HEK293 (cell line): ENCODE measurements at regions of chr6 and their contacts with region 1.

Region 1: GRCh38 chr6:56314683-56315523 is 67.5 kb upstream of the COL21A1 start:
- H3K4me3 ChIP-seq: no peak overlapping the region
- H3K27ac ChIP-seq: no peak overlapping the region
- H3K4me1 ChIP-seq: peaks cover 7% of the 10 kb centered on the region
- CTCF ChIP-seq: peak; percentile 40; the same call in 1 of the 2 replicates

Region 2: GRCh38 chr6:56176741-56177140 is 138.2 kb before region 1 on chr6:
- CTCF ChIA-PET with region 1: no interaction called
- POLR2A ChIA-PET with region 1: no interaction called
- H3K4me3 ChIP-seq: no peak overlapping the region
- H3K27ac ChIP-seq: no peak overlapping the region
- H3K4me1 ChIP-seq: no peaks in the 10 kb centered on the region
- CTCF ChIP-seq: no peak

Region 3: GRCh38 chr6:56329271-56330050 is 14.6 kb after region 1 on chr6:
- CTCF ChIA-PET with region 1: interaction called, 27 read pairs
- POLR2A ChIA-PET with region 1: no interaction called
- H3K4me3 ChIP-seq: no peak overlapping the region
- H3K27ac ChIP-seq: no peak overlapping the region
- H3K4me1 ChIP-seq: no peaks in the 10 kb centered on the region
- CTCF ChIP-seq: no peak

Region 4: DNA sequence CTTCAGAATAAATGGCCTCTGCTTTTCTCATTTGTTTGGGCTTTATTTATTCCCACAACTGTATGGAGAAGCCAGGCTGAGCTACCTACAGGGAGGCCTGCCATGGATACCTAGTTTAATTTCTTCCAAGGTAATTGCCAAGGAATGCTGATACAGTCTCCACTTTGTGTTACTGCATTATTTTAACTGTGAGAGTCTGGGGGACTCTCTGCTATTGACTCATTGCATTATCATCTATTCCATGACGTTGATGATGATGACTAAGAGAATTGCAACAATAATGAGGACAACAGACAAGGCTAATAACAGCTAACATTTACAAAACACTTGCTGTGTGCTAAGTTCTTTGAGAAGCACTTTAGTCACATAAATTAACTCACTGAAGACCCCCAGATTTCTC is 20.8 kb after region 1 on chr6:
- CTCF ChIA-PET with region 1: interaction called, 12 read pairs
- POLR2A ChIA-PET with region 1: no interaction called
- H3K4me3 ChIP-seq: no peak overlapping the region
- H3K27ac ChIP-seq: no peak overlapping the region
- H3K4me1 ChIP-seq: no peaks in the 10 kb centered on the region
- CTCF ChIP-seq: no peak

Region 5: DNA sequence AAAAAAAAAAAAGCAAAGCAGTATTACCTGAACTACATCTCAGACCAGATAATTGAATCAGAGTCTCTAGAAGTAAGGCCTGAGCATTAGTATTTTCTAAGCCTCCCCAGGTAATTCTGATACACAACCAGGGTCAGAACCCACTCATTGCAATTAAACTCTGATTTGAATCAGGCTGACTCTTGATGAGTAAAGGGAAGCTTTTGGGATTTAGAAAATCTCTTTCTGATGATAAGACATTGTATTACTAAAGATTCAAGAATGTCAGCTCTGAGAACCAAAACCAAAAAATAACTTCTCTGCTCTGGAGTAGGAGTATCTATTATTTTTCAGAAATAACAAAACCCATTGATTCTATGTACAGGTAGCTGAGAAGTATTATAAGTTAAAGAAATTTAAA is 32.6 kb after region 1 on chr6:
- CTCF ChIA-PET with region 1: interaction called, 26 read pairs
- POLR2A ChIA-PET with region 1: no interaction called
- H3K4me3 ChIP-seq: no peak overlapping the region
- H3K27ac ChIP-seq: no peak overlapping the region
- H3K4me1 ChIP-seq: no peaks in the 10 kb centered on the region
- CTCF ChIP-seq: no peak

Region 6: DNA sequence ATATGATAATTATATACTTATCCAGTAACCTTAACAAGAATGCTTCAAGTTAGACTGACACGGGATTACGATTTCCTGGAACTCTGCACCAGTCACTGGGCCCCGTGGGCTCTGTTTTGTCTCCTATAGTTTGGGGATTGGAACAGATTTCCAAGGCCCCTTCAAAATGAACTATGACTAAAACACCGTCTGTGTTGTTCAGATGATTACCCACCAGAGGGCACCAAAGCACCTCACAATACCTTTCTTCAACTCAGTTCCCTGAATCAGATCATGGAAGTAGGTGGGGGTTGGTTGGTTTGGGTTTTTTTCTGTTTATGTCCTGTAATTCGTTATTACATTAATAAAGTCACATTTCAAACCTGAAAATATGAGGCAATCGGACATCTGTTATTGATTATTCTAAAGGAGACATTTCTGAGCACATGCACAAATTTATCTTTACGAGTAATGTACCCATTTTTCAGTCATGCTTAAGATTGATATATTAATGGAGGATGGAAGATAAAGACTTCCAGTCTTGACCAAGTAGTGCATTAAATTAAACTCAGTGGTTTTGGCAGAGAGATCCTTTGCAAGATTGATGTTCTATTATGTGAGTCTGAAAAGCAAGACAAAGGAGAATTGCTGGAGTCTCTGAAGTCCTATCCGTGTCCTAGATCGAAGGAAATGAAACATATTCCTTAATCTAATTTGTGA is 44.4 kb after region 1 on chr6:
- CTCF ChIA-PET with region 1: interaction called, 12 read pairs
- POLR2A ChIA-PET with region 1: no interaction called
- H3K4me3 ChIP-seq: no peak overlapping the region
- H3K27ac ChIP-seq: no peak overlapping the region
- H3K4me1 ChIP-seq: peaks cover 3% of the 10 kb centered on the region; the same call in 1 of the 2 replicates
- CTCF ChIP-seq: peak; percentile 65

Region 7: DNA sequence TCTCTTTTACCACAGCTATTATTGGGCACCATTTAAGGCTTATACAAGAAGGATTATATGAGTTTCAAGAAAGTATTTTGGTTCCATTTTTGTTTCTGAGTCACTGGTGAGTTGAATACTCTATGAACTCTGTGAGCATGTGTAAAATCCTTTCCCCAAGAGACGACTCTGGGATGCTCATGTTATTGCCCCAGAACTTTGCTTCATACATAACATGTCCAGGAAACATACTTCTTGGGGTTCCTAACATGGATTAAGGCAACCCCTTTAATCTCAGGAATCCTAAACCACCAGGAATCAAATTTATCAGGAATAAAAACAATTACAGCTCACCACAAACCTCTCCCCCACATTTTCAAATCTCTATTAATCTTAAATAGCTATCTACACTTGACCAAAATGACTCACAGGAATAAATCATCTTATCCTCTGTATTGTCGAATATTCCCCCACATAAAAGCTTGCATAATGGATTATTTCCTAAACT is 50.0 kb after region 1 on chr6:
- CTCF ChIA-PET with region 1: interaction called, 10 read pairs
- POLR2A ChIA-PET with region 1: no interaction called
- H3K4me3 ChIP-seq: no peak overlapping the region
- H3K27ac ChIP-seq: no peak overlapping the region
- H3K4me1 ChIP-seq: peaks cover 19% of the 10 kb centered on the region
- CTCF ChIP-seq: no peak